HEK293T (cell line): ENCODE measurements at regions of chr19 and their contacts with region 1.

Region 1: GRCh38 chr19:39480337-39481228 is at the start of gene TIMM50:
- DNase-seq: peak; percentile 95

Region 2: DNA sequence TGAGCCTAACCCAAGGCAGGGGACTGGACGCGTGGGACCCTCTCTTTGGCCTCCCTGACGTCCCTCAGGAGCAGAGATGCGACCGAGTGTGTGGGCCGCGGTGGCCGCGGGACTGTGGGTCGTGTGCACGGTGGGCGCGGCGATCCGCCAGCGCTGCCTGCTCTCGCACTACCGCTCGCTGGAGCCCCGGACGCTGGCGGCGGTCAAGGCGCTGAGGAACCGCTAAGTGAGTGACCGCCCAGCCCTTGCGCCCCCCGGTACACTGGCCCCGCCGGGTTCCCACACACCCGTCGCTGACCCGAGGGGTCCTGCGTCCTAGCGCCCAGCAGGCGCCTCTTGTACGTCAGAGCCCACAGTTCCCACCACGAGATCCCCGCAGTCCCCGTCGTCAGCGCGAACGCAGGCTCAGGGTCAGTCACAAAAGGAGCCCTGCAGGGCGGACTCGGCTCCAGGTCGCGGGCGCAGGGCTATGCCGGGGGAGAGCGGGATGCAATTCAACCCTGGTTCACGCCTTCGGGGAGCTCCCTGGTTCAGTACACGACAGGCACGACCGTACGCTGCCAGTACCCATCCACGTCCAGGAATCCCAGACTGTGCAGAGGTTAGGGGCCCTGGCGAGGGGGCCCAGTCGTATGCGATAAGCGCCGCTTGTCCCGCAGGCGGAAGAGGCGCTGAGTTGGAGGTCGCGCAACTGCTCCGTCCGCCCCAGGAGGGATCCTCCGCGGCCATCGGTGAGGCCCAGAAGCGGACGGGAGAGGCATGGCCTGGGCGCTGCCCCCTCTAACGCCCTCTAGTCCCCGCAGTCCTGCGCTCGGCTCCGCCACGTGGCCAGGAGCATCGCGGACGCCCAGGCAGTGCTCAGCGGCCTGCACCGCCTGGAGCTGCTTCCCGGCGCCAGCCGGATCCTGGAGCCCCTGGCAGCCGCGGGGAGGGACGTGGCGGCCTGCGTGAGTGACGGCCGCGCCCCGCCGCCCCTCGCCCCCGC is 216.0 kb before region 1 on chr19:
- CTCF ChIA-PET with region 1: no interaction called
- POLR2A ChIA-PET with region 1: no interaction called
- DNase-seq: no peak

Region 3: GRCh38 chr19:39502640-39503417 is 22.2 kb after region 1 on chr19:
- CTCF ChIA-PET with region 1: no interaction called
- POLR2A ChIA-PET with region 1: interaction called, 11 read pairs
- DNase-seq: peak; percentile 91

Region 4: DNA sequence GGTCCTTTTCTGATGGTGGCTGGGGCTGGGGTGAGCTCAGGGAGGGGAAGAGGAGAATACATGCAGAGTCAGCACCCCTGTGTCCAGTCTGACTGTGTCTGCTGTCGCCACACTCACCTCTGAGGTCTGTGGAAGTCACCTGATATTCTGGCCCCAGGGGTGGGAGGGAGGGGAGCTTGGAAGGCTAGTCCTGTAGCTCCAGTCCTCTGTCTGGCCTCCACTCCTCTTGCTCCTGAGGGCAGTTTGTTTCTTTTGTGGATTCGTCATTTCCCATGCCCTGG is 39.5 kb after region 1 on chr19:
- CTCF ChIA-PET with region 1: no interaction called
- POLR2A ChIA-PET with region 1: no interaction called
- DNase-seq: no peak